ENCODE measurements at regions of chr2 and their contacts with region 1.

Region 1: GRCh38 chr2:71614976-71615766 is 161.8 kb downstream of the DYSF start:
- DNase-seq: peak; percentile 61 to 82
- ATAC-seq: peak; percentile 74 to 79
- H3K4me3 ChIP-seq: no peak overlapping the region
- H3K27ac ChIP-seq: peak overlapping the region; percentile 80 to 87 (median 86)
- H3K4me1 ChIP-seq: peaks cover 33 to 42% of the 10 kb centered on the region in 2 donors
- H3K27me3 ChIP-seq: no peaks in the 10 kb centered on the region
- CTCF ChIP-seq: no peak
- POLR2A ChIP-seq: peak in 1 of 2 donors; percentile 33

Region 2: GRCh38 chr2:71646028-71646427 is 30.9 kb after region 1 on chr2:
- in situ Hi-C with region 1: no loop called
- intact Hi-C with region 1: loop called (anchors 2 kb)
- DNase-seq: peak; percentile 89 to 94
- ATAC-seq: peak; percentile 100
- H3K4me3 ChIP-seq: no peak overlapping the region
- H3K27ac ChIP-seq: peak overlapping the region; percentile 78 to 91 (median 82)
- H3K4me1 ChIP-seq: peaks cover 16 to 18% of the 10 kb centered on the region in 2 donors
- H3K27me3 ChIP-seq: no peaks in the 10 kb centered on the region
- CTCF ChIP-seq: no peak
- POLR2A ChIP-seq: peak; percentile 28 to 33

Region 3: GRCh38 chr2:71685078-71685848 is 70.1 kb after region 1 on chr2:
- in situ Hi-C with region 1: no loop called
- intact Hi-C with region 1: loop called (anchors 5 kb)
- DNase-seq: peak; percentile 78 to 89
- ATAC-seq: peak; percentile 68 to 79
- H3K4me3 ChIP-seq: no peak overlapping the region
- H3K27ac ChIP-seq: peak overlapping the region; percentile 86 to 92 (median 89)
- H3K4me1 ChIP-seq: peaks cover 34 to 56% of the 10 kb centered on the region in 2 donors
- H3K27me3 ChIP-seq: no peaks in the 10 kb centered on the region
- CTCF ChIP-seq: no peak
- POLR2A ChIP-seq: peak in 1 of 2 donors; percentile 32